ENCODE measurements at regions of chr1 and their contacts with region 1.

Region 1: GRCh38 chr1:228059634-228060457 is 22.7 kb upstream of the ARF1 start:
- DNase-seq: peak; percentile 94
- ATAC-seq: peak; percentile 68
- H3K4me3 ChIP-seq: peak overlapping the region; percentile 58
- H3K27ac ChIP-seq: no peak overlapping the region
- H3K4me1 ChIP-seq: peaks cover 8% of the 10 kb centered on the region; the same call in 1 of the 2 replicates
- H3K27me3 ChIP-seq: no peaks in the 10 kb centered on the region
- CTCF ChIP-seq: no peak

Region 2: DNA sequence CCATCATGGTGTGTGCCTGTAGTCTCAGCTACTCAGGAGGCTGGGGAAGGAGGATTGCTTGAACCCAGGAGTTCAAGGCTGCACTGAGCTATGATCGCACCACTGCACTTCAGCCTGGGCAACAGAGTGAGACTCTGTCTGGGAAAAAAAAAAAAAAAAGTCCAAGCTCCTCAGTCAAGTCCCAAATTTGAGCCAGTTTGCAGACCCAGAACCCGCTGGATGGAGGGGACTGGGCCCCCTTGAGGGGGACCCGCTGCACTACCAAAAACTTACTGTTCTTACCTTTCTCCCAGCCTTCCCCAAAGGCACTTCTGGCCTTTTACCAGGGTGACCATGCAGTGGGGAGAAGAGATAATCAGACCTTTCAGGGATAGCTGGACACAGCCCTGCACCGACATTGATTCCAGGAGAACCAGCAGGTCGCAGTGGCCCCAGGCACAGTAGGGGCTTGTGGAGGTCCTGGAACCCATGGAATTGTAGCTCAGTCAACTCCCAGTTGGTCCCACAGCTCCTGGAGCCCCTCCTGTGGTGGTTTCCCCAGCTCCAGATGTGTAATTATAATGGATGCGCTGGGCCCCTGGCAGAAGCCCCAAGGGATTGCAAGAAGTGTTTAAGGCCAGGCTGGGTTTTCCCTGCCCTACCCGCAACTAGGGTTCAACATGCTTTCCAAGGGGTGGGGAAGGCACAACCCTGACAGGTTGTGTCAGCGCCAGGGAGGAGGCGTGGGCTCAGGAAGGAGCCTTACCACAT is 108.0 kb before region 1 on chr1:
- CTCF ChIA-PET with region 1: no interaction called
- POLR2A ChIA-PET with region 1: no interaction called
- intact Hi-C with region 1: no loop called
- DNase-seq: no peak
- ATAC-seq: no peak
- H3K4me3 ChIP-seq: no peak overlapping the region
- H3K27ac ChIP-seq: no peak overlapping the region
- H3K4me1 ChIP-seq: peaks cover 19% of the 10 kb centered on the region
- H3K27me3 ChIP-seq: no peaks in the 10 kb centered on the region
- CTCF ChIP-seq: no peak

Region 3: DNA sequence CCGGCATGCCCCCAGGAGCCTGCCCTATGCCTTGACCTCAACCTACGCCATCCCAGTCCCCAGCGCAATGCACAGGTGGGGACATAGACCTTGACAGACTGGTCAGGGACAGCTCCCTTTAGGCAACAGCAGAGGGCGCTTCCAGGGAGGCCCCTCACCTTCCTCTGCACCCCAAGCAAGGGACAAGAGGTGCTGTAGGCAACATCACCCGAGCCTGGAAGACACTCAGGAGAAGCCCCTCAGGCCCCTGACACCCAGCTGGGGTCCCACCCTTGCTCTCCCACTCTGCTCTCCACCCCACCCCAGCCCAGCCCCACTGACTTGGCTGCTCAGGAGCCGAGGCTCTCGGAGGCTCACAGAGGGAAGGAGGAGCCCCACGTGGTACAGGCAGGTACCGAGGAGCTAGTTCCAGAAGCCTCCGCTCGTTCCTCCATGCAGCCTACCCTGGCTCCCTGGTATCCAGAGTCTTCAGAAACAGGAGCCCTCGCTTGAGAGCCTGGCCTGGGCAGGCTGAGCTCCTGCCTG is 55.5 kb before region 1 on chr1:
- CTCF ChIA-PET with region 1: interaction called, 13 read pairs
- POLR2A ChIA-PET with region 1: interaction called, 3 read pairs
- intact Hi-C with region 1: loop called (anchors 5 kb)
- DNase-seq: peak; percentile 71
- ATAC-seq: peak; percentile 65
- H3K4me3 ChIP-seq: no peak overlapping the region
- H3K27ac ChIP-seq: no peak overlapping the region
- H3K4me1 ChIP-seq: peaks cover 4% of the 10 kb centered on the region; the same call in 1 of the 2 replicates
- H3K27me3 ChIP-seq: peaks cover 33% of the 10 kb centered on the region
- CTCF ChIP-seq: peak; percentile 94